ENCODE measurements at regions of chr17 and their contacts with region 1.

Region 1: GRCh38 chr17:41801374-41802271 is 10.1 kb downstream of the P3H4 start:
- DNase-seq: peak; percentile 92
- H3K4me3 ChIP-seq: peak overlapping the region in 1 of 8 donors; percentile 31
- H3K27ac ChIP-seq: no peak overlapping the region
- H3K4me1 ChIP-seq: peaks cover 6 to 28% (median 18%) of the 10 kb centered on the region in 6 donors
- H3K27me3 ChIP-seq: no peaks in the 10 kb centered on the region
- CTCF ChIP-seq: peak; percentile 79 to 97 (median 95)
- POLR2A ChIP-seq: no peak

Region 2: GRCh38 chr17:41738077-41738735 is 63.4 kb before region 1 on chr17:
- intact Hi-C with region 1: loop called (anchors 2 kb)
- DNase-seq: peak; percentile 94
- H3K4me3 ChIP-seq: no peak overlapping the region
- H3K27ac ChIP-seq: no peak overlapping the region
- H3K4me1 ChIP-seq: peaks cover 5 to 32% (median 25%) of the 10 kb centered on the region in 6 donors
- H3K27me3 ChIP-seq: peaks cover 5 to 48% (median 42%) of the 10 kb centered on the region in 7 donors
- CTCF ChIP-seq: peak; percentile 93 to 99 (median 98)
- POLR2A ChIP-seq: no peak

Region 3: DNA sequence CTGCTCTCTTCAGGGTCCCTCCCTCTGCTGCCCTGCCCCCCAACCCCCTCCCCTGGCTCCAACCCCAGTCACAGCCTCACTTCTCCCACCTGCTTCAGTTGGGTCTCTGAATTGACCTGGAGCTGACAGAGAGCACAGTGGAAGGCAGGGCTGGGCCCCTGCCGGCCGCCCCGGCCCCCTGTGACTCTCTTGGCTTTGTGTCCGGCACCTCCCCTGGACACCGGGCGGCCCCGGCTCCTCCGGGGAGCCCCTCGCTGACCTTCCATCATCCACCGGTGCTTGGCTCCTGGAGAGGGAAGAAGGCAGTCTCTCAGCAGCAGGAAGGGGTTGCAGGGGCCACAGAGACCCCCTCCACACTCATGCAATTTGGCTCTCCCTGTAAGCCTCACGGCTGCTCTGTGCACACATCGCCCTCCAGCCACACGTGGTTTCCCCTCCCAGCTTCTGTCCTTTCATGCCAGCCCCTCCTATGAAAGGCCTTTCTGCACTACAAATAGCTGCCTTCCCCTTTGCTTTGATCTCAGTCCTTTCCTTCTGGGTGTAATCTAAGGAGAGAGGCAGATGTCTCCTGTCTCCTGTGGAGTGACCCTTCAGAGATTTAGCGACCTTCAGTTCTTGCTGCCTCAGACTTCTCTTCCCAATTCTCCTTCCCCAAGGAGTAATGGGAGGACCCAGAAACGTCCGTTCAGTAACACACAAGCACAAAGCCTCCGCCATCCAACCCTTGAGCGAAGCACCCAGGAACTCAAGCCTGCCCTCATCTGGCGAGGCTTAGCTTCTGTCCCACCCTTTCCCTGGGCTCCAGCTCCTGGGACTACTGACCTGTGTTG is 226.6 kb after region 1 on chr17:
- intact Hi-C with region 1: no loop called
- DNase-seq: no peak
- H3K4me3 ChIP-seq: no peak overlapping the region
- H3K27ac ChIP-seq: no peak overlapping the region
- H3K4me1 ChIP-seq: peaks cover 14 to 42% (median 22%) of the 10 kb centered on the region in 6 donors
- H3K27me3 ChIP-seq: peaks cover 0 to 10% (median 0%) of the 10 kb centered on the region in 7 donors
- CTCF ChIP-seq: no peak
- POLR2A ChIP-seq: no peak